Left ventricle myocardium inferior (tissue), 1 donor: ENCODE measurements at regions of chr11 and their contacts with region 1.

Region 1: GRCh38 chr11:30855383-30856006 is 269.3 kb upstream of the MPPED2 start:
- DNase-seq: no peak
- H3K4me3 ChIP-seq: no peak overlapping the region
- H3K27ac ChIP-seq: no peak overlapping the region
- H3K4me1 ChIP-seq: peaks cover 4% of the 10 kb centered on the region
- H3K27me3 ChIP-seq: no peaks in the 10 kb centered on the region
- CTCF ChIP-seq: peak; percentile 67

Region 2: DNA sequence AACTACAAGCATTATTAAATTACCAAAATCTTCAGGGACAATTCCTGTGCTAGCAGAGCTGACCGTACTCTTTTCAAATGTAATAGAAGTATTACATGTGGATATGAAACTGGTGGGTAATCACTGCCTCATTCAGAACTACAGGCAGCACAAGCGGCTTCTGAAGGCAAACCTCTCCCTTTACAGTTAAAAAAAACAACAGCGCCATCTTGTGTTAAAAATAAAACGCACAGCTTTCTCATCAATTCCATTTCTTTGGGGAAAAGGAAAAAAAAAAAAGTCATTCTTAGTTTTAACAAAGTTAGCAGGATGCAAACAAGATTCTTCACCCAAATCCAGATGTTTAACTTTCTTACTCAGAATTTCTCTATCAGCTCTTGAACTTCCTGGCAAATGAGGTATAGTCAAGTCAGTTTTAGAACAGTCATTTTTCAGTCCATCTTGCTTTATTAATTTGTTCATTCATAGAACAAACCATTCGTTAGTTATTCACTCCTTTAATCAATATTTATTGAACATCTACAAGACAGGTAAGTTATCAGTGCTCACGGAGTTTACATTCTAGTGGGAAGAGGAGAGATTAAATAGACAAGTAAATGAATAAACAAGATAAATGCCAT is 62.5 kb after region 1 on chr11:
- intact Hi-C with region 1: loop called (anchors 5 kb)
- DNase-seq: no peak
- H3K4me3 ChIP-seq: no peak overlapping the region
- H3K27ac ChIP-seq: no peak overlapping the region
- H3K4me1 ChIP-seq: no peaks in the 10 kb centered on the region
- H3K27me3 ChIP-seq: peaks cover 11% of the 10 kb centered on the region
- CTCF ChIP-seq: peak; percentile 86